ENCODE measurements at regions of chr2 and their contacts with region 1.

Region 1: GRCh38 chr2:196171248-196171871 is at the start of gene STK17B:
- DNase-seq: peak; percentile 92 to 97 (median 95)
- ATAC-seq: peak; percentile 81
- H3K4me3 ChIP-seq: peak within 1 kb of the TSS; percentile 78
- H3K4me3 Mint-ChIP-seq: peak within 1 kb of the TSS; percentile 87 to 98 (median 94)
- H3K27ac ChIP-seq: peak within 1 kb of the TSS; percentile 98
- H3K27ac Mint-ChIP-seq: peak within 1 kb of the TSS; percentile 89 to 98 (median 96)
- H3K4me1 ChIP-seq: peaks cover 29 to 37% of the 10 kb centered on the region in 2 donors
- H3K4me1 Mint-ChIP-seq: peaks cover 19 to 43% (median 38%) of the 10 kb centered on the region in 7 donors
- H3K27me3 ChIP-seq: no peaks in the 10 kb centered on the region
- H3K27me3 Mint-ChIP-seq: peaks cover 0 to 2% (median 0%) of the 10 kb centered on the region in 5 donors
- total RNA-seq, gene STK17B: 274 to 513 (median 338) TPM

Region 2: GRCh38 chr2:195656859-195657633 is 514.3 kb before region 1 on chr2 and contains the start of gene SLC39A10:
- CTCF ChIA-PET with region 1: no interaction called
- POLR2A ChIA-PET with region 1: interaction called, 4 read pairs
- intact Hi-C with region 1: loop called (anchors 1 to 5 kb)
- DNase-seq: peak; percentile 95 to 100 (median 98)
- ATAC-seq: peak; percentile 86
- H3K4me3 ChIP-seq: peak within 1 kb of the TSS; percentile 81
- H3K4me3 Mint-ChIP-seq: peak within 1 kb of the TSS; percentile 95 to 100 (median 99)
- H3K27ac ChIP-seq: peak within 1 kb of the TSS; percentile 99
- H3K27ac Mint-ChIP-seq: peak within 1 kb of the TSS; percentile 100
- H3K4me1 ChIP-seq: peaks cover 3 to 24% of the 10 kb centered on the region in 2 donors
- H3K4me1 Mint-ChIP-seq: peaks cover 7 to 36% (median 30%) of the 10 kb centered on the region in 7 donors
- H3K27me3 ChIP-seq: no peaks in the 10 kb centered on the region
- H3K27me3 Mint-ChIP-seq: peaks cover 0 to 9% (median 0%) of the 10 kb centered on the region in 5 donors
- total RNA-seq, gene SLC39A10: 48.3 to 92.9 (median 60.7) TPM

Region 3: DNA sequence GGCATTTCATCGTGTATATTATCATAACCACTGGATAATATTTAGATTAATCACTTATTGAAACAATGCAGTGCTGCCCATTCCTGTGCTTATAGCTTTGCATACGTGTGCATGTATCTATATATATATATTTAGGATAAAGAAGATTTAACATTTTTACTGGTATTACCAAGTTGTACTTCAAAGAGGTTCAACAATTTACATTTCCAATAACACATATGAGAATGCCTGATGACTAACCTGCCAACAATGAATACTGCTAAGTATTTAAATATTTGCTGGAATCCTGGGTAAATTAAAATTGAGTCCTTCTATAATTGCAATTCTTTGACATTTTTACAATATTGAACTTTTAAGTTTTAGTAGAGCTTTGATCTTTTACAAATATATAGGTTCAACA is 402.9 kb before region 1 on chr2:
- CTCF ChIA-PET with region 1: no interaction called
- POLR2A ChIA-PET with region 1: no interaction called
- intact Hi-C with region 1: no loop called
- DNase-seq: no peak
- ATAC-seq: no peak
- H3K4me3 ChIP-seq: no peak overlapping the region
- H3K4me3 Mint-ChIP-seq: no peak overlapping the region
- H3K27ac ChIP-seq: no peak overlapping the region
- H3K27ac Mint-ChIP-seq: no peak overlapping the region
- H3K4me1 ChIP-seq: no peaks in the 10 kb centered on the region
- H3K4me1 Mint-ChIP-seq: no peaks in the 10 kb centered on the region
- H3K27me3 ChIP-seq: no peaks in the 10 kb centered on the region
- H3K27me3 Mint-ChIP-seq: peaks cover 0 to 5% (median 0%) of the 10 kb centered on the region in 5 donors

Region 4: DNA sequence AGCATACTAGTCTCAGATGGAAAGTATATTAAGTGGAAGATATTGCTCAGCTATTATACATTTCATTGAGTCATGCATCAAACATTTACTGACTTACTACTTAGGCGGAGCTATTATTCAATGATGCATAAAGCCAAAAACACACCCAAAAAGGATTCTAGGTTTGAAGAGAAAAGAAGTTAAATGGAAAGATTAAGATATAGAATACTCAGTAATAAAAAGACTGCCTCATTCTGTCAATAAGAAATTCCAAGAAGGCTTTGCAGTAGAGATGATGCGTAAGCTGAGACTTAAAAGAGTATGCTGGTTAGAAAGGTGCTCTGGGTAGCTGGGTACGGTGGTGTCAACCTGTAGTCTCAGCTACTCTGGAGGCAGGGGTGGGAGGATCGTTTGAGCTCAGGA is 27.6 kb before region 1 on chr2:
- CTCF ChIA-PET with region 1: interaction called, 4 read pairs
- POLR2A ChIA-PET with region 1: interaction called, 87 read pairs
- intact Hi-C with region 1: no loop called
- DNase-seq: no peak
- ATAC-seq: no peak
- H3K4me3 ChIP-seq: no peak overlapping the region
- H3K4me3 Mint-ChIP-seq: peak overlapping the region in 9 of 10 donors; percentile 23 to 87 (median 52)
- H3K27ac ChIP-seq: peak overlapping the region; percentile 49
- H3K27ac Mint-ChIP-seq: peak overlapping the region; percentile 71 to 92 (median 87)
- H3K4me1 ChIP-seq: peaks cover 48 to 50% of the 10 kb centered on the region in 2 donors
- H3K4me1 Mint-ChIP-seq: peaks cover 36 to 90% (median 75%) of the 10 kb centered on the region in 7 donors
- H3K27me3 ChIP-seq: no peaks in the 10 kb centered on the region
- H3K27me3 Mint-ChIP-seq: no peaks in the 10 kb centered on the region

Region 5: GRCh38 chr2:196187898-196188458 is 16.6 kb after region 1 on chr2:
- CTCF ChIA-PET with region 1: interaction called, 3 read pairs
- POLR2A ChIA-PET with region 1: interaction called, 71 read pairs
- intact Hi-C with region 1: loop called in 1 of 2 experiments (anchors 1 kb)
- DNase-seq: no peak
- ATAC-seq: no peak
- H3K4me3 ChIP-seq: no peak overlapping the region
- H3K4me3 Mint-ChIP-seq: peak overlapping the region in 6 of 10 donors; percentile 5 to 65 (median 35)
- H3K27ac ChIP-seq: no peak overlapping the region
- H3K27ac Mint-ChIP-seq: peak overlapping the region in 7 of 9 donors; percentile 56 to 91 (median 79)
- H3K4me1 ChIP-seq: peaks cover 27 to 67% of the 10 kb centered on the region in 2 donors
- H3K4me1 Mint-ChIP-seq: peaks cover 22 to 100% (median 95%) of the 10 kb centered on the region in 7 donors
- H3K27me3 ChIP-seq: no peaks in the 10 kb centered on the region
- H3K27me3 Mint-ChIP-seq: no peaks in the 10 kb centered on the region

Region 6: GRCh38 chr2:196225213-196225612 is 53.9 kb after region 1 on chr2:
- CTCF ChIA-PET with region 1: interaction called, 63 read pairs
- POLR2A ChIA-PET with region 1: interaction called, 359 read pairs
- intact Hi-C with region 1: loop called in 1 of 2 experiments (anchors 1 kb)
- DNase-seq: no peak
- ATAC-seq: no peak
- H3K4me3 ChIP-seq: no peak overlapping the region
- H3K4me3 Mint-ChIP-seq: peak overlapping the region in 3 of 10 donors; percentile 17 to 37 (median 17)
- H3K27ac ChIP-seq: no peak overlapping the region
- H3K27ac Mint-ChIP-seq: peak overlapping the region in 7 of 9 donors; percentile 14 to 97 (median 50)
- H3K4me1 ChIP-seq: peaks cover 13 to 70% of the 10 kb centered on the region in 2 donors
- H3K4me1 Mint-ChIP-seq: peaks cover 48 to 88% (median 85%) of the 10 kb centered on the region in 7 donors
- H3K27me3 ChIP-seq: no peaks in the 10 kb centered on the region
- H3K27me3 Mint-ChIP-seq: no peaks in the 10 kb centered on the region

Region 7: GRCh38 chr2:196277002-196277401 is 105.6 kb after region 1 on chr2:
- CTCF ChIA-PET with region 1: interaction called, 26 read pairs
- POLR2A ChIA-PET with region 1: interaction called, 36 read pairs
- intact Hi-C with region 1: loop called (anchors 1 kb)
- DNase-seq: peak in 7 of 9 donors; percentile 45 to 74 (median 63)
- ATAC-seq: peak; percentile 79
- H3K4me3 ChIP-seq: no peak overlapping the region
- H3K4me3 Mint-ChIP-seq: peak overlapping the region in 6 of 10 donors; percentile 30 to 83 (median 65)
- H3K27ac ChIP-seq: peak overlapping the region; percentile 63
- H3K27ac Mint-ChIP-seq: peak overlapping the region; percentile 50 to 99 (median 89)
- H3K4me1 ChIP-seq: peaks cover 21 to 42% of the 10 kb centered on the region in 2 donors
- H3K4me1 Mint-ChIP-seq: peaks cover 29 to 60% (median 47%) of the 10 kb centered on the region in 7 donors
- H3K27me3 ChIP-seq: no peaks in the 10 kb centered on the region
- H3K27me3 Mint-ChIP-seq: no peaks in the 10 kb centered on the region

Region 8: DNA sequence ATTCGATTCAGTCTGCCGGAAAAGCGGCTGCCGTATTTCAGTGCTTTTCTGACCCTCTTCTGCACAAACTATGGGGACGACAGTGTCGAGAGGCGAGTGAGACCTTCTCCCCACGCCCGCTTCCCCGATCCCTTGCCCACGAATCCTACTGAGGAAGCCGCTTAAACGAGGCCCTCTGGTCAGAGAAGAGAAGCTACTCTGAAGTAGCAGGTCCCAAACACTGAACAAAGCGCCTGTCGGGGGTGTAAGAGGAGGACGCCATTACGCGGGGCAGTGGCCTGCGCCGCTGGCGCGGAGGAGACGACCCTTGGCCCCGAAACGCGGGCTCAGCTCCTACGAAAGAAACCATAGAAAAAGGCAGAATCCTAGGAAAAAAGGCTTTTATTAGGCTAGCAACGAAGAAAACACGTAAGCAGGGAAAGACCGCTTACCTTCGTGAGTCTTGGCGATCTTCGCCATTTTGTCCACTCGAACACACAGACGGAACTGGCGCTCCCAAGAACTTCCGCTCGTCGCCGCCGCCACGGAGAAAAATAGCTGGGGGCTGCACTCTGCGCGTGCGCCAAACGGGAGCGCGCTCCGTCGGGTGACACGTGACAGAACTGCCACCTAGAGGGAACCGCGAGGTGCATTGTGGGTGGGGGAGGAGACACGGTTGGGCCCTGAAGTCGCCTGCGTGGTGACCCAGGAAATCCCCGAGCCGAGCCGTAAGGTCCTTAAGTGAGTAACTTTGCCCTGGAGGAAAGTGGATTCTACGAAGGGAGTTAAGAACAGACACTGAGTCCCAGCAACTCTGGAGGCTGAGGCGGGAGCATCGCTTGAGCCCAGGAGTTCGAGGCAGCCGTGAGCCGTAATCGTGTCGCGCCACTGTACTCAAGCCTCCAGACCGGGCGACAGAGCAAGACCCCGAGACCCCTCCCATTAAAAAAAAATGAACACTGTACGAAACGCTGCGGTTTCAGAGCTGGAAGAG is 1263.5 kb after region 1 on chr2 and contains the start of gene SF3B1:
- CTCF ChIA-PET with region 1: no interaction called
- POLR2A ChIA-PET with region 1: no interaction called
- intact Hi-C with region 1: loop called in 1 of 2 experiments (anchors 10 kb)
- DNase-seq: peak; percentile 98 to 99 (median 99)
- ATAC-seq: peak; percentile 99
- H3K4me3 ChIP-seq: peak within 1 kb of the TSS; percentile 98
- H3K4me3 Mint-ChIP-seq: peak within 1 kb of the TSS; percentile 88 to 100 (median 98)
- H3K27ac ChIP-seq: peak within 1 kb of the TSS; percentile 98
- H3K27ac Mint-ChIP-seq: peak within 1 kb of the TSS; percentile 100
- H3K4me1 ChIP-seq: peaks cover 28 to 46% of the 10 kb centered on the region in 2 donors
- H3K4me1 Mint-ChIP-seq: peaks cover 34 to 60% (median 49%) of the 10 kb centered on the region in 7 donors
- H3K27me3 ChIP-seq: no peaks in the 10 kb centered on the region
- H3K27me3 Mint-ChIP-seq: peaks cover 0 to 3% (median 0%) of the 10 kb centered on the region in 5 donors
- total RNA-seq, gene SF3B1: 330 to 737 (median 528) TPM

Measured in naive thymus-derived CD4-positive, alpha-beta T cell (primary cell).